ENCODE measurements at regions of chr11 and their contacts with region 1.

Region 1: DNA sequence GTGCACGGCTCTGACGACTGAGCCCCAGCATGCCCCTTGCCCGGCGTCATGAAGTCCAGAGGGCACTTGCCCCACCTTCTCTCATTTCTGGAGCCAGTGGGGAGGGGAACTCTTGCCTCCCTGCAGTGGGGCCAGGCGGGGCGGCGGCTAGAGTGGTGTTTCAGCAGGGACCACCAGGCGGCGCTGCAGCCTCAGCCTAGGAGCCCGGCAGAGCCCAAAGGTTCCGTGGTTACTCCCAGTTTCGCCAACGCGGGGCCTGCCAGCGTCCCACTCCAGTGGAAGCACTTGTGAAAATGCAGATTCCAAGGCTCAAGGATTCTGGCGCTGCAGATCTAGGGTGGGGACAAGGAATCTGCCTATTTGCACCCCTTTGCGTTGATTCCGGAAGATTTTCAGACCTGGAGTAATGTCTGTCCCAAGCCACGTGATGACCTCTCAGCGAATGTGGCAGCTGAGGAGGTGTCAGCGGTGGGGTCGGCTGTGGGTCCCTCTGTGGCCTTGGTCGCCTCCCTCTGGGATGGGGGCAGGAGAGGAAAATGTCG is 55.7 kb downstream of the CD82 start:
- DNase-seq: peak; percentile 63
- H3K4me3 ChIP-seq: no peak overlapping the region
- H3K27ac ChIP-seq: no peak overlapping the region
- H3K4me1 ChIP-seq: peaks cover 23% of the 10 kb centered on the region
- H3K27me3 ChIP-seq: no peaks in the 10 kb centered on the region
- CTCF ChIP-seq: peak; percentile 94 to 98
- POLR2A ChIP-seq: no peak

Region 2: DNA sequence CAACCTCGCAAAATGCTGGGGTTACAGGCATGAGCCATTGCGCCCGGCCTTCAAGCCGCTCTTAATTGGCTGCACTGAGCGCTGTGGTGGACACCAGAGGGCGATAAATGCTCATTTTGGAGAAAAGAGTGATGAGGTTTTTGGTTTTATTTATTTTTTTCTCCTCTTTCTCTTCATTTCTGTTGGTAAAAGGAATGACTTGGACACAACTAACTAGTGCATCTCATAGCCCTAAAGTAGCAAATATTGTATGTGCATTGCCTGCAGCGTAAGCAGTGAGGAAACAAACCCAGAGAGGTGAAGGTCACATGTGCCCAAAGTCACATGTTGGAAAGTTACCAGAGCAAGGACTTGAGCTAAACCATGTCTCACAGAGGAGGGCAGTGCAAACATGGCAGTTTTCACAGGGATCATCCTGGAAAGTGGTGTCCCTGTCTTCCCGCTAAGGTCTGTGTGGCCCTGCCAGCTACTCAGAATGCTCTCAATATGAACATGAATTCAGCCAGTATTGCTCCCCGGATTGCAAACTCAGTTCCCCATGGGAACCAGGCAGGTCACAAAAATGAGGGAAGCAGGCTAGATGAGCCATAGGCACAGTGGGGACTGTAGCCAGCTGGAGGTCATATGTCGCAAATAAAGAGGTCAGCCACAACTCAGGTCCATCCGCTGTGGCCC is 64.3 kb before region 1 on chr11:
- CTCF ChIA-PET with region 1: interaction called, 860 read pairs
- POLR2A ChIA-PET with region 1: interaction called, 3 read pairs
- dilution Hi-C with region 1: no loop called
- intact Hi-C with region 1: loop called (anchors 1 kb)
- DNase-seq: peak; percentile 61
- H3K4me3 ChIP-seq: no peak overlapping the region
- H3K27ac ChIP-seq: no peak overlapping the region
- H3K4me1 ChIP-seq: no peaks in the 10 kb centered on the region
- H3K27me3 ChIP-seq: peaks cover 2 to 4% of the 10 kb centered on the region in 2 experiments
- CTCF ChIP-seq: peak; percentile 51 to 76
- POLR2A ChIP-seq: no peak

Region 3: DNA sequence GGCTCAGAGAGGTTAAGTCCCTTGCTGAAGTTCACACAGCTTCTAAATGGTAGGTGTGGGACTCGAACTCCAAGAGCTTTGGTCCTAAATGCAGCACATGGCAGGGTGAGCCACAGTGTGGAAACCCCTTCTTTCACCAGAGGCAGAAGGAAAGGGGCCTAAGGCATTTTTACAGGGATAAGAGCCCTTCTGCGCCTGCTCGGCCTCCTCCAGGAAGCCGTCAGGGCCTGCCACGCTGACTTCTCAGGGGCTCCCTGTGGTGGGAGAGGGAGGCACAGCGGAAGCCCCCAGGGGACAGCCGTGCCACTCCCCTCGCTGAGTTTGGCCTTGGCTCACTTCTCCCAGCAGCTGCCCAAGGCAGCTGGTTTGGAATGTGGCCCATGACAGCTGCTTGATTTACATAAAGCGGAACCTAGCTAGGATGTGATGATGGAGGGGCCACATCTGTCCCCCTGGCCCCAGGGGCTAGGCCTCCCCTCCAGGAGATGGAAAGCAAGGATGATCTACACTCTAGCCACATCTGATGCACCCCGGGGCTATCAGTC is 20.3 kb before region 1 on chr11:
- CTCF ChIA-PET with region 1: interaction called, 12 read pairs
- POLR2A ChIA-PET with region 1: no interaction called
- dilution Hi-C with region 1: no loop called
- intact Hi-C with region 1: no loop called
- DNase-seq: no peak
- H3K4me3 ChIP-seq: no peak overlapping the region
- H3K27ac ChIP-seq: no peak overlapping the region
- H3K4me1 ChIP-seq: no peaks in the 10 kb centered on the region
- H3K27me3 ChIP-seq: no peaks in the 10 kb centered on the region
- CTCF ChIP-seq: no peak
- POLR2A ChIP-seq: no peak

Region 4: DNA sequence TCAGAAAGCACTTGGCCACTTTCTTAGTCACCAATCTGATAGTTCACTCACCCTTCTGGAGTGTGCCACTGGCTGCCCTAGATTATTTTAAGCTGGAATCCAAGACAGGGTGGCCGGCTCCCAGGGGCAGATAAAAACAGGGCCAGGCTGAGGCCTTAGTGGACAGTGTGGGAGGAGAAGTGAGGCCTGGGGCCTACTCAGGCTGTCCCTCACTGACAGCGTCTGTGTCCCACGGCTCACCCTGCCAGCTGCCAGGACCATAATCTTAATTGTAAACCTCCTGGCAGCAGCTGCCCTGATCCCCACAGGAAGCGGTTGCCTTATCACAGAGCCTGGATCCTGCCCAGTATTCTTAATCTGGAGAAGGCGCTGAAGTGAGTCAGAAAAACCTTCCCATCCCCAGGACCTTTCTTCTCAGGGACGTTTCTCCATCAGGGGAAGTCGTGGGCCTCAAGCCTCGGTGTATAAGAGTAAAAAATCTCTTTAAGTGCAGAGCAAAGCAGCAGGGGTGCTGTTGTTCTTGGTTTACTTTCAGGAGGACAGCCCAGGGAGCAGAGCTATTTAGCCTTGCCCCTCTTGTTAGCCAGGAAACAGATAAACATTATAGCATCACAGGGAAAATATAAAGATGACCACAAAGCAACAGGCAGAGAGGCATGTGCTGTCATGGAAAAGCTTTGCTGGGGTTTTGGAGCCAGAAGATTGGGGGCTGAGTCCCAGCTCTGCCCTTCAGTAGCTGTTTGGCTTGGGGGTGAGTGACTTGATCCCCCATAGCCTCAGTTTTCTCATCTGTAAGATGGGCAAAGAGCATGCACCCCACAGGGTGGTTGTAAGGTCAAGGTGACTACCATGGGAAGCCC is 145.1 kb after region 1 on chr11:
- CTCF ChIA-PET with region 1: interaction called, 9 read pairs
- POLR2A ChIA-PET with region 1: no interaction called
- dilution Hi-C with region 1: no loop called
- intact Hi-C with region 1: loop called (anchors 2 kb)
- DNase-seq: peak; percentile 92
- H3K4me3 ChIP-seq: no peak overlapping the region
- H3K27ac ChIP-seq: peak overlapping the region; percentile 68
- H3K4me1 ChIP-seq: peaks cover 34% of the 10 kb centered on the region
- H3K27me3 ChIP-seq: no peaks in the 10 kb centered on the region
- CTCF ChIP-seq: no peak
- POLR2A ChIP-seq: no peak

Region 5: DNA sequence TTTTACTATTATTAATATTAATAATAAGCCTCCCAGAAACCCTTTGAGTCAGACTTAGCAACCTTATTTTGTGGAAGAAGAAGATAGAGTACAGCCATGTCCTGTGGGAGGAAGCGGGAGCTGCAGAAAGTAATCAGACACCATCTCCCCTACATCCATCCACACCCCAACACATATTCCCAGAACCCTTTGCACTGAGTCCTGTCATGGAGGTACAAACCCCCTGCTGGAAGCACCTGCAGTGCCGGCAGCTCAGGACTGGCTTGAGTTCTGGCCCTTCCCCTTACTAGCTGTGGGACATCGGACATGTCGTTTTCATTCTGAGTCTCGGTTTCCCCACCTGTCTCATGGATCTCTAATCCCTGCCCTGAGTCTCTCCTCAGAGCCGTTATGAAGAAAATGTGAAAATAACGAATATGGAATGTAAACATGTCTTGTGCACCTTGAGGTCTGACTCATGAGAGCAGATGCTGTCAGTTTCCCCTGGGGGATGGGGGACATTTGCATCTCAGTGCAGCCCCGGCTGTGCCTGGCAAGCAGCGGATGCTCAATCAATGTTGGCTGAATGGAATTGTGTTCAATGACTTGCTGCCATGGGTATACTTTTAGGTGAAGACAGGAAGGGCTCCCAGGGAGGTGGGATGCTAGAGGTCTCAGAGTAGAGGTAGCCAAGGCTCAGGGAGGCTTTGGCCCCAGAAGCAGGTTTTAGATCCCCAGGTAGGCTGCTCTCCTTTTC is 284.1 kb after region 1 on chr11:
- CTCF ChIA-PET with region 1: interaction called, 187 read pairs
- POLR2A ChIA-PET with region 1: no interaction called
- dilution Hi-C with region 1: no loop called
- intact Hi-C with region 1: no loop called
- DNase-seq: no peak
- H3K4me3 ChIP-seq: no peak overlapping the region
- H3K27ac ChIP-seq: no peak overlapping the region
- H3K4me1 ChIP-seq: no peaks in the 10 kb centered on the region
- H3K27me3 ChIP-seq: no peaks in the 10 kb centered on the region
- CTCF ChIP-seq: no peak
- POLR2A ChIP-seq: no peak

Region 6: DNA sequence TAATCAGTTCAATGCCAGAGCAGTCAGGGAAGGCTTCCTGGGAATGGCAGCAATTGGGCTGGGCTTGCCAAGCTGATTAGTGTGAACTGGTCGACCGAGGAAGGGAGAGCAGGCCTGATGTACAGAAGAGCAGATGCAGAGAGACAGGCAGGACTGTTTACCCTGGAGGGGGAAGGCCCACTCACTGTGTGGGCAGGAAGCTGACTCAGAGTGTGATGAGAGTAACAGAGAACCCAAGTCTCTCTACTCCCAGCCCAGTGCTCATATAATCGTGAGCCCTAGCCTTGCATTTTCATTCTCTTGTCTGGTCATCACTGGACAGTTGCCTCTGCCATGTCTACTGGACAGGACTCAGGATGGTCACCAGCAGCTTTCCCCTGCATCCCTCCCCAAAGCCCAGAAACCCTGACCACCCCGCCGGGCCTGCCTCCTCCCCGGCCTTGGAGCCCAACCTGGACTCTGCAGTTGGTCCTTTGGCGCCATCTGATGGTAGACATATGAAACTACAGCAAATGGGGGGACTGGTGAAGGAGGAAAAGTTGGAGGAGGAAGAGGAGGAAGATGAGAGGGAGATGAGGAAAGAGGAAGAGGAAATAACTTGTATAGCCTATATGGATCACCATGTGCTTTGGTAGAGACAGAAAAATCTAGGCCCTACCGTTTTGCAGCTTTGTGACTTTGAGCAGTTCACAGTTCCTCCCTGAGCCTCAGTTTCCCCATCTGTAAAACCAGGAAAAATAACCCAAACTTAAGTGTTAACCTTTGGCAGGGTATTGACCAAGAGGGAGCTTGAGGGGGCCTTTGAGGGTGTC is 481.8 kb after region 1 on chr11:
- CTCF ChIA-PET with region 1: interaction called, 5 read pairs
- POLR2A ChIA-PET with region 1: no interaction called
- dilution Hi-C with region 1: no loop called
- intact Hi-C with region 1: loop called (anchors 1 kb)
- DNase-seq: peak; percentile 86
- H3K4me3 ChIP-seq: no peak overlapping the region
- H3K27ac ChIP-seq: no peak overlapping the region
- H3K4me1 ChIP-seq: peaks cover 7% of the 10 kb centered on the region
- H3K27me3 ChIP-seq: peaks cover 0 to 3% of the 10 kb centered on the region in 2 experiments
- CTCF ChIP-seq: peak; percentile 82
- POLR2A ChIP-seq: no peak